OCI-LY7 (cell line): ENCODE measurements at regions of chr20 and their contacts with region 1.

Region 1: GRCh38 chr20:53828682-53829254 is 235.1 kb upstream of the ZNF217 start:
- DNase-seq: peak; percentile 50
- H3K4me3 ChIP-seq: peak overlapping the region; percentile 60
- H3K27ac ChIP-seq: peak overlapping the region; percentile 89
- H3K4me1 ChIP-seq: peaks cover 73% of the 10 kb centered on the region
- CTCF ChIP-seq: no peak; the same call in 1 of the 2 replicates

Region 2: GRCh38 chr20:53652090-53652858 is 176.5 kb before region 1 on chr20:
- CTCF ChIA-PET with region 1: no interaction called
- POLR2A ChIA-PET with region 1: interaction called, 3 read pairs
- intact Hi-C with region 1: loop called (anchors 5 kb)
- DNase-seq: peak; percentile 77
- H3K4me3 ChIP-seq: peak overlapping the region; percentile 50
- H3K27ac ChIP-seq: peak overlapping the region; percentile 91
- H3K4me1 ChIP-seq: peaks cover 59% of the 10 kb centered on the region
- CTCF ChIP-seq: no peak

Region 3: GRCh38 chr20:53738039-53738944 is 90.5 kb before region 1 on chr20:
- CTCF ChIA-PET with region 1: no interaction called
- POLR2A ChIA-PET with region 1: interaction called, 6 read pairs
- intact Hi-C with region 1: loop called (anchors 1 kb)
- DNase-seq: peak; percentile 48
- H3K4me3 ChIP-seq: peak overlapping the region; percentile 56
- H3K27ac ChIP-seq: peak overlapping the region; percentile 11
- H3K4me1 ChIP-seq: peaks cover 65% of the 10 kb centered on the region
- CTCF ChIP-seq: no peak

Region 4: DNA sequence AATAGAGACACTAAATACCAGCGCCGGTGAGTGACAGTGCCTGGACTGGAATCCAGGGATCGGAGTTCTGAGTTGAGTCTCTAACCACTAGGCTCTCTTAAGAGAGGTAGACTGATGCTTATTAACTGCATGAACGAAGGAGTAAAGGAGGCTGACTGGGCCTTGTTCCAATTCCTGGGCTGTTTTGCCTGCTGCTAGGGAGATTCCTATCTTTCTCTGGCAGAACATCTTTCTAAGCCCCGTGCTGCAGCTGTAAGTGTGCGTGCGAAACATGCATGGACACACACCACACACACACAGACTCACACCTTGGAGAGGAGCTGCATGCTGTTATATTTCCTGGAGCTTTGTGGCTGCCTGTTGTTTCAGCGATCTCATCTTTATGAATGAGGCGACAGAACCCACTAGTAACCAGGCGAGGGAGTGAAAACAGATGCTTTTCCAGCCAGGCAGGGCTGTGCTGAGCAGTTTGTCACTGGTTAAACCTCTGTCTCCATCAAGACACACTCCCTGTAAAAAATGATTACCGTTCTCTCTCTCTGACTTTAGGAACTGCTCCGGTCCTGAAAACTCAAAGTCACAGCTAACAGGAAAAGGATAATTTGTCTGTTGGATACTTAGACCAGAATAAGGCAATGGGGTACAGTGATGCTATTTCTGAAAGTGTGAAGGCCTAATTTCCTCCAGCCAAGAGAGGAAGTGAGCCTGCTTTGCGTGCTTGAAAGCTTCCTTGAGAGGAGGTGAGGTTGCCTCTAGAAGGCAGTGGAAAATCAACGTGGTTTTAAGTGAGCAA is 77.7 kb before region 1 on chr20:
- CTCF ChIA-PET with region 1: no interaction called
- POLR2A ChIA-PET with region 1: interaction called, 8 read pairs
- intact Hi-C with region 1: loop called (anchors 5 kb)
- DNase-seq: peak; percentile 86
- H3K4me3 ChIP-seq: peak overlapping the region; percentile 27
- H3K27ac ChIP-seq: peak overlapping the region; percentile 73
- H3K4me1 ChIP-seq: peaks cover 56% of the 10 kb centered on the region
- CTCF ChIP-seq: 0 out of 2 replicates have a peak, but pooled peaks have one; percentile 16

Region 5: DNA sequence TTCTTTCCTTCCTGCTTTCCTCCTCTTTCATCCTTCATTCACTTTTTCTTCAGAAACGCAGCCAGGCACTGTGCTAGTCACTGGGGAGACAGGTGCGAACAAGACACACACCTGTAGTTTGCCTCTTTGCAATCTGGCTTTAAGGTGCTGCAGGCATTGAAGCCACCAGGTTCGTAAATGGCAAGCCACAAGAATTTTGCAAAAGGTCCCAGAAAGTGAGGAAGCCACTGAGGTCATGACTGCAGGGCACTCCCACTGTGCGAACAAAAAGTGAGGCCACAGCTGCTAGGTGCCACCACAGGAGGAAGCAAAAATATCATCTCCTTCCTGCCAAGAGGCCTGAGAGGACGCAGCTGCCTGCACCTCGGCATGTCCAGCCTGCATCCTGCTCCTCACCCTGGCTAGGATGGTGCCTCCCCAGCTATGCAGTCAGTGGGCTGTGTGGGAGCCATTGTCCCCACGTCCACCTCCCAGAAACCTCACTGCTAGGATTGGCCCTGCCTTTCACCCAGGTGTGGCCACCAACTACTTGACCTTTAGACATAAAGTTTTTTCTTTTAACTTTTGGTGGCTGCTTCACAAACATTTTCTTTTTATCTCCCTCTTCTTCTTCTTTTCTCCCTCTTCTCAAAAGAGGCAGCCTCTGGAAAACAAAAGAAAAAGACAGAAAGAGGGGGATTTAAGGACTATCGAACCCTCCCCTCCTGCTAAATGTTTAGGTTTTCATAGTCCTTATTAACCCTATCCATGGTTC is 10.8 kb after region 1 on chr20:
- CTCF ChIA-PET with region 1: no interaction called
- POLR2A ChIA-PET with region 1: interaction called, 14 read pairs
- intact Hi-C with region 1: no loop called
- DNase-seq: peak; percentile 94
- H3K4me3 ChIP-seq: peak overlapping the region; percentile 43
- H3K27ac ChIP-seq: peak overlapping the region; percentile 76
- H3K4me1 ChIP-seq: peaks cover 91% of the 10 kb centered on the region
- CTCF ChIP-seq: no peak

Region 6: GRCh38 chr20:54014293-54014926 is 185.6 kb after region 1 on chr20:
- CTCF ChIA-PET with region 1: no interaction called
- POLR2A ChIA-PET with region 1: no interaction called
- intact Hi-C with region 1: no loop called
- DNase-seq: no peak
- H3K4me3 ChIP-seq: no peak overlapping the region
- H3K27ac ChIP-seq: no peak overlapping the region
- H3K4me1 ChIP-seq: peaks cover 7% of the 10 kb centered on the region
- CTCF ChIP-seq: no peak

Region 7: DNA sequence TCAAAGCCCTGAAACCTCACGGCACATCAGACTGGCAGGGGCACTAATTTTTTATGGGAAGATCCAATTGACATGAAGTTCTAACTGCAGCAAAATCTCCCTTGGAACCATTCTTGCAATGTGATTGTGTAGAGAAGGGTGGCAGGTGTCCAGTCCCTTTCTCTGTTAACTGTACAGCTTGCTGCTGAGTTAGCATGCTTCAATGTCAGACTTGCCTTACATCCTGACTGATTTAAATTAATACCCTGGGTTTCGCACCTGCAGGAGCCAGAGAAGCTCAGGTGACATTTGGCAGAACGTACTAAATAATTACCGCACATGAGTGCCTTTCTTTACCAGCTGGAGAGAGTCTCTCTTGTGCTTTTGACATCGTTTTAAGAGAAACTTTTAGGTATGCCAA is 769.6 kb after region 1 on chr20:
- CTCF ChIA-PET with region 1: no interaction called
- POLR2A ChIA-PET with region 1: no interaction called
- intact Hi-C with region 1: no loop called
- DNase-seq: no peak
- H3K4me3 ChIP-seq: no peak overlapping the region
- H3K27ac ChIP-seq: no peak overlapping the region
- H3K4me1 ChIP-seq: no peaks in the 10 kb centered on the region
- CTCF ChIP-seq: no peak